Activated B cell treated with CpG ODN at 0.5 μM for 24 hours (primary cell): ENCODE measurements at regions of chr5 and their contacts with region 1.

Region 1: GRCh38 chr5:173679909-173680630 is 63.6 kb upstream of the BOD1 start:
- DNase-seq: no peak
- ATAC-seq: peak; percentile 54
- H3K4me3 Mint-ChIP-seq: peak overlapping the region; percentile 44
- H3K27ac Mint-ChIP-seq: peak overlapping the region; percentile 86
- H3K4me1 Mint-ChIP-seq: peaks cover 47% of the 10 kb centered on the region
- H3K27me3 Mint-ChIP-seq: no peaks in the 10 kb centered on the region
- CTCF ChIP-seq: no peak

Region 2: GRCh38 chr5:173781814-173782670 is 102.0 kb after region 1 on chr5:
- CTCF ChIA-PET with region 1: no interaction called
- POLR2A ChIA-PET with region 1: interaction called, 3 read pairs
- intact Hi-C with region 1: loop called (anchors 5 kb)
- DNase-seq: peak; percentile 50
- ATAC-seq: peak; percentile 77
- H3K4me3 Mint-ChIP-seq: peak overlapping the region; percentile 66
- H3K27ac Mint-ChIP-seq: peak overlapping the region; percentile 78
- H3K4me1 Mint-ChIP-seq: peaks cover 61% of the 10 kb centered on the region
- H3K27me3 Mint-ChIP-seq: no peaks in the 10 kb centered on the region
- CTCF ChIP-seq: no peak